HEK293 (cell line): ENCODE measurements at regions of chr13 and their contacts with region 1.

Region 1: GRCh38 chr13:99200432-99201167 is at the start of gene UBAC2:
- H3K4me3 ChIP-seq: peak within 1 kb of the TSS; percentile 96
- H3K27ac ChIP-seq: peak within 1 kb of the TSS; percentile 94
- H3K4me1 ChIP-seq: no peaks in the 10 kb centered on the region
- CTCF ChIP-seq: no peak; the same call in 1 of the 2 replicates

Region 2: DNA sequence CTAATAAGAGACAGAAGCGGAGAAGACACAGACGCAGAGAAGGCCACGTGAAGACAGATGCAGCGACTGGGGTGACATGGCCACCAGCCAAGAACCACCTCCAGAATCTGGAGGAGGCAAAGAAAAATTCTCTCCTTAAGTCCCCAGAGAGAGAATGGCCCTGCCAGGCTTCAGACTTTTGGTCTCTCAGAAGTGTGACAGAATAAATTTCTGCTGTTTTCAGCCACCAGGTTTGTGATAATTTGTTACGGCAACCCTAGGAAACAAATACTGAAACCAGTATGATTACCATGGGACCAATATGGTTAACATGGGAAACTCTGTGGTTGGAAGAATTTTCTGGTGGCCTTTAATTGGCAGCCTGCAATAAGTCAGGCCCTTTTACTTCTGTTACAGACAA is 158.8 kb before region 1 on chr13:
- CTCF ChIA-PET with region 1: no interaction called
- POLR2A ChIA-PET with region 1: no interaction called
- H3K4me3 ChIP-seq: no peak overlapping the region
- H3K27ac ChIP-seq: no peak overlapping the region
- H3K4me1 ChIP-seq: no peaks in the 10 kb centered on the region
- CTCF ChIP-seq: no peak

Region 3: DNA sequence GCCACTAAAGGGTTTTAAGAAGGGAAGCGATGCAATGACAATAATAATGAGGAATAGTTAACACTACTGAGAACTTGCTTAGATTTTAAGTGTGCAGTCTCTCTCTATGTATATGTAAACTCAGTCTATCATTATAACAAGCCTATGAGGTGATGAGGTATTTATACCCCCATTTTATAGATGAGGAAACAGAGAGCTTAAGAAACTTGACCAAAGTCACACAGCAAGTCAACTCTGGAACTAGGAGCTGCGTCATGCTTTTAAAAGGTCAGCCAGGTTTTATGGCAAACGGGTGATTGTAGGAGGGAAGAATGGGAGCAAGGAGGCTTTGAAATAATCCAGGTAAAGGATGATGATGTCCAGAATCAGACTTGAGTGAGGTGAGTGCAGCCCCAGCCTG is 404.0 kb after region 1 on chr13:
- CTCF ChIA-PET with region 1: no interaction called
- POLR2A ChIA-PET with region 1: interaction called, 10 read pairs
- H3K4me3 ChIP-seq: no peak overlapping the region
- H3K27ac ChIP-seq: no peak overlapping the region
- H3K4me1 ChIP-seq: no peaks in the 10 kb centered on the region
- CTCF ChIP-seq: no peak